ENCODE measurements at regions of chr1 and their contacts with region 1.

Region 1: GRCh38 chr1:100459358-100460114 is 78.4 kb upstream of the GPR88 start:
- DNase-seq: peak; percentile 79 to 93
- H3K4me3 ChIP-seq: no peak overlapping the region
- H3K27ac ChIP-seq: peak overlapping the region in 1 of 5 donors; percentile 30
- H3K4me1 ChIP-seq: peaks cover 0 to 25% (median 7%) of the 10 kb centered on the region in 4 donors
- H3K27me3 ChIP-seq: no peaks in the 10 kb centered on the region
- CTCF ChIP-seq: peak in 5 of 7 experiments; percentile 73 to 87 (median 76)
- EP300 ChIP-seq: no peak
- POLR2A ChIP-seq: no peak

Region 2: GRCh38 chr1:99808391-99809115 is 651.0 kb before region 1 on chr1:
- intact Hi-C with region 1: loop called (anchors 10 kb)
- DNase-seq: peak in 1 of 2 donors; percentile 92
- H3K4me3 ChIP-seq: peak overlapping the region in 1 of 4 donors; percentile 17
- H3K27ac ChIP-seq: peak overlapping the region in 3 of 5 donors; percentile 27 to 79 (median 46)
- H3K4me1 ChIP-seq: peaks cover 0 to 13% (median 6%) of the 10 kb centered on the region in 4 donors
- H3K27me3 ChIP-seq: no peaks in the 10 kb centered on the region
- CTCF ChIP-seq: peak in 5 of 7 experiments; percentile 47 to 63 (median 59)
- EP300 ChIP-seq: no peak
- POLR2A ChIP-seq: no peak

Region 3: GRCh38 chr1:100279954-100280682 is 179.4 kb before region 1 on chr1:
- intact Hi-C with region 1: loop called (anchors 10 kb)
- DNase-seq: peak in 1 of 2 donors; percentile 43
- H3K4me3 ChIP-seq: no peak overlapping the region
- H3K27ac ChIP-seq: no peak overlapping the region
- H3K4me1 ChIP-seq: peaks cover 0 to 22% (median 11%) of the 10 kb centered on the region in 4 donors
- H3K27me3 ChIP-seq: no peaks in the 10 kb centered on the region
- CTCF ChIP-seq: no peak
- EP300 ChIP-seq: no peak
- POLR2A ChIP-seq: no peak

Region 4: DNA sequence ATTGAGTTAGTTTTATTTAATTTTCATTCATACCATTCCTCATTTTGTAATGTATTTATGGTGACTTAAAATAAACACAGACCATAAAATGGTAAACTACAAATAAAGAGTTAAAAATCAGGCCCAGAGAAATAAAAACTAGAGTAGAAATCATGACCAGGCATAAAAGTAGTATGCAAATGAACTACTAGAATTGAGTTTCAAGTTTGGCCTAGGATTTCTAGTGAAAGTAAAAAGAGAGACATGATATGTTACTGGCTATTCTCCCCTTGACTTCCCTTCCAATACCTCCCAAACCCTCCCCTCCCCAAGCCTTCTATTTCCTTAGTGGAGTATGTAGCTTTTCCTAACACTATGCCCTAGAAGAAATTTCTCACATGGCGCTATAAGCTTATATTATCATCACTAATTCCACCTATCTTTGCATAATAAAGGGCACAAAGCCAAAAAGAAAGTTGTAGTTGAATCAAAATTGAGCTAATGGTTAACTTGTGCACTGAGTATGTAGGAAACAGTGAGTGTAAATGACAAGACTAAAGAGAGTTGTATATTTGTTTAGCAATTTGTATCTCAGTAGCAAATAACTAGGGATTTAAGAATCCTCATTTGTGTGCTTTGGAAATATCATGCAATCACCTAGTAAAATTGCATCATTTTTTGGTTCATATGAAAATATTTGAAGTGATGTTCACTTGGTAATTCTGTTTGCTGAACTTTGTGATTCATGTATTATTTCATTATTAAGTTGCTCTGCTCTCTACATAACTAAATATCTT is 136.9 kb before region 1 on chr1:
- intact Hi-C with region 1: no loop called
- DNase-seq: peak in 1 of 2 donors; percentile 21
- H3K4me3 ChIP-seq: no peak overlapping the region
- H3K27ac ChIP-seq: peak overlapping the region in 1 of 5 donors; percentile 27
- H3K4me1 ChIP-seq: peaks cover 5 to 15% (median 7%) of the 10 kb centered on the region in 4 donors
- H3K27me3 ChIP-seq: no peaks in the 10 kb centered on the region
- CTCF ChIP-seq: no peak
- EP300 ChIP-seq: no peak
- POLR2A ChIP-seq: no peak

Region 5: GRCh38 chr1:100866041-100866900 is 406.7 kb after region 1 on chr1:
- intact Hi-C with region 1: loop called (anchors 10 kb)
- DNase-seq: peak in 1 of 2 donors; percentile 62
- H3K4me3 ChIP-seq: no peak overlapping the region
- H3K27ac ChIP-seq: no peak overlapping the region
- H3K4me1 ChIP-seq: peaks cover 0 to 10% (median 0%) of the 10 kb centered on the region in 4 donors
- H3K27me3 ChIP-seq: no peaks in the 10 kb centered on the region
- CTCF ChIP-seq: peak in 5 of 7 experiments; percentile 36 to 67 (median 49)
- EP300 ChIP-seq: no peak
- POLR2A ChIP-seq: no peak

Measured in stomach (tissue), 19 donors.